Activated CD4-positive, alpha-beta memory T cell treated with anti-CD3 and anti-CD28 coated beads, Interleukin-2, amount 10 ng/mL, durations not matched to agents 7 days and 5 days (primary cell): ENCODE measurements at regions of chr2 and their contacts with region 1.

Region 1: GRCh38 chr2:28821295-28821958 is 10.8 kb downstream of the SPDYA start:
- DNase-seq: peak; percentile 53
- H3K4me3 Mint-ChIP-seq: no peak overlapping the region
- H3K27ac Mint-ChIP-seq: no peak overlapping the region
- H3K4me1 Mint-ChIP-seq: peaks cover 3% of the 10 kb centered on the region
- H3K27me3 Mint-ChIP-seq: peaks cover 2% of the 10 kb centered on the region

Region 2: DNA sequence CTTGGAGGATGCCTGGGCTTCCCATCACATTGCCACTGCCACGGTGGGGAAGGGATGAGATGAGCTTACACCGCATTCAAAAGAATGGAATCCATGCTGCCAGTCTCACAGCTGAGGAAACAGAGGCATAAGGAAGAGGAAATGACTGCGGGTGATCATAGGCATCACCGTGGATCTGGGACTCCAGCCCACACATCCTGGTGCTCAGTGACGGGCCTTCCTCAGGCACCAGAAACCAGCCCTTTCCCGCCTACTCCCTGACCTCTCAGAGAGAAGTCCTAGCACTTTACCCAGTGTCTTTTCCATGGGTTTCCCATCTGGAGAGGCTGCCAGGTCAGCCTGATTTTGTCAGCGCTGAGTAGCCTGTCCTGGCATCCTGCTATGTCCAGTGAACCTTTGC is 330.9 kb before region 1 on chr2:
- CTCF ChIA-PET with region 1: no interaction called
- POLR2A ChIA-PET with region 1: no interaction called
- DNase-seq: no peak
- H3K4me3 Mint-ChIP-seq: no peak overlapping the region
- H3K27ac Mint-ChIP-seq: no peak overlapping the region
- H3K4me1 Mint-ChIP-seq: no peaks in the 10 kb centered on the region
- H3K27me3 Mint-ChIP-seq: peaks cover 2% of the 10 kb centered on the region

Region 3: DNA sequence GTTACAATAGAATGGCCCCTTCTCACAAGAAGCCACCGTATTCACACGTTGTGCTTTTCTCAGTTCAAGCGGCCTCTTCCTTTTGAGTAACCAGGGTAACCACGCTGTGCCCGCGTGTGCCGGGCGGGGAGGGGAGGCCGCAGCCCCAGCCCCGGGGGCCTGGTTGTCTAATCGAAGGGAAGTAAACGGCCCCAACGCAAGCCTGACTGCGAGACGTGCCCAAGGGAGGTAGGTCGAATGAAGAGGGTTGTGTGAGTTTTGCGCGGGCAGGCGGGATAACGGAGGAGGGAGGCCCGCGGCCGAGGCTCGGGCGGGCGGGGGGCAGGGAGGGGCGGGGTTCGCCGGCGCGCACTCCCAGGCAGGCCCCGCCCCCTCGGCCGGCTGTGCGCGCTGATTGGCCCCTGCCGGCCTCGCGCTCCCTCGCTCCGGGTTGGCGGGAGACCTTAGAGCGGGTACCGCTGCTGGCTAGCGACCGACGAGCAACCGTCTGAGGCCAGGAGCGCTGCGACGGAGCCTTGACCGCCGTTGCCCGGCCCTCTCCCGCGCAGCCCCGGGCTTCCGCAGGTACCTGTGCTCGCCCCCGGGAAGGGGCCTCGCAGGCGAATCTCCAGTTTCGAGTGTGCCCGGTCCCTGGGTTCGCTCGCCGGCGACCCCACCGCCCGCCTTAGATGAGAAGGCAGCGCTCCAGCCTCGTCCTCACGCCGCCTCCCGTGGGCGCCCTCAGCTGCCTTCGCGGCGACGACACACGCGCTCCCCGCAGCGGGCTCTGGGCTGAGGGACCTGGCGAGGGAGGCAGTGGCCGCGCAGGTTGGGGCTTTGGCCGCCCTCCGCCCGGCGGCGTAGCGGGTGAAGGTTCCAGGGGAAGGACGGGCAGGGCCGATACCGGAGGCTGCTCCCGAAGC is 10.8 kb before region 1 on chr2 and contains the start of gene SPDYA:
- CTCF ChIA-PET with region 1: interaction called, 22 read pairs
- POLR2A ChIA-PET with region 1: interaction called, 3 read pairs
- DNase-seq: peak; percentile 86
- H3K4me3 Mint-ChIP-seq: peak within 1 kb of the TSS; percentile 75
- H3K27ac Mint-ChIP-seq: no peak within 1 kb of the TSS
- H3K4me1 Mint-ChIP-seq: peaks cover 20% of the 10 kb centered on the region
- H3K27me3 Mint-ChIP-seq: peaks cover 2% of the 10 kb centered on the region
- total RNA-seq, gene SPDYA: 0.93 to 1.2 TPM